Activated CD4-positive, alpha-beta T cell treated with anti-CD3 and anti-CD28 coated beads, Interleukin-2, amount 10 ng/mL, durations not matched to agents 24 days and 14 days (primary cell): ENCODE measurements at regions of chr1 and their contacts with region 1.

Region 1: DNA sequence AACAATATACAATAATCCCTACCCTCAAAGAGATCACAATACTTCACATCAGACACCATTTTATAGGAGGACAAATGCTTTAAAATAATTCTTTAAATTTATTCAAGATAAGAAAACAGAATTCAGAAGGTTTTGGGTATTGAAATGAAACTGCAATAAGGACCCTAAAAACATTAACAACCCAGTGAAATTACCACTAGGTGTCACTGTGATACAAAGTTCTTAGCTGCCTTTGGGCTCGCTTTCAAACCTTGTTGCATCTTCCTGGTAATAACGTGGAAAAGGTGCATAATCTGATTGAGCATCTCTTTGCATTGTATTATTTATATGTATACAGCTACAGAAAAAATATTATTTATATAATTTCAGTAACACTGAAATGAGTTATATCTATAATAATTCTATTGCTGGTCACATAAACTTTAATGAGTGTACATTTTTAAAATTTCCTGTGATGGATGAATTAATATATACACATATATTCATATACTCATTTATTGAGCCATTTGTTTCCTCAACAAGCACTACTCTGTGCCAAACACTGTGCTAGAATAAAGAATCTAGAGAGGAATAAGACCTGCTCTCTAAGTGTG is 185.2 kb downstream of the FAF1 start:
- DNase-seq: peak; percentile 65
- H3K4me3 Mint-ChIP-seq: no peak overlapping the region
- H3K27ac Mint-ChIP-seq: no peak overlapping the region
- H3K4me1 Mint-ChIP-seq: peaks cover 2% of the 10 kb centered on the region
- H3K27me3 Mint-ChIP-seq: no peaks in the 10 kb centered on the region

Region 2: DNA sequence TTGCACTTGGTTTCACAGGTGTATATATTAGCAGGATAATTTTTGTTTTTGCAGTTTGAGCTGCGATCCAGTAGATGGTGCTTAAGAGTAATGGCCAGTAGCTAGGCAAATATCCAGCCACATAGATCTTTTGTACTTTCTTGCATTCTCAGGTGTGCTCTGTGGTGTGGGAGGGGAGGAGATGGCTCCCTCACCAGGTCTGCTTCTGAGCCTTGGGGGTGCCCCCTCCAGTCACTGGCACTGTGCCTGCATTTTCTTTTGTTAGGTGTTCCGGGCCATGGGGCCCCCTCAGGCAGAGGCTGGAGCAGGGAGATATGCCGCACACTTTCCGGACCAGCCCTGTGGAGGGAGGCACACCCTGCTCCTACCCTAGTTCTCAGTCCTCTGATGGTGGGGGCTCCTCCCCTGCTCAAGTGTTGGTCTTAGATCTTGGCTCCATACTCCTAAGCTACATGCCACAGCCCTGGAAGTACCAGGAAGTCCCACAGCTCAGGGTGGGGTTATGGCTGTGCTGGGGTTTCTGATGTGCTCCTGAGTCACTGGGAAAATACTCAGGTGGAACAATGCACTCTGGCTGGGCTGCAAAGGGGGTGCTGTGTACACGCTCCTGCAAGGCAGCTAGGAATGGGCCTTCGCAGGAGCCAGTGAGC is 154.1 kb before region 1 on chr1:
- intact Hi-C with region 1: no loop called
- DNase-seq: no peak
- H3K4me3 Mint-ChIP-seq: no peak overlapping the region
- H3K27ac Mint-ChIP-seq: no peak overlapping the region
- H3K4me1 Mint-ChIP-seq: no peaks in the 10 kb centered on the region
- H3K27me3 Mint-ChIP-seq: no peaks in the 10 kb centered on the region

Region 3: GRCh38 chr1:51044834-51045233 is 270.0 kb after region 1 on chr1:
- intact Hi-C with region 1: loop called (anchors 10 kb)
- DNase-seq: no peak
- H3K4me3 Mint-ChIP-seq: no peak overlapping the region
- H3K27ac Mint-ChIP-seq: no peak overlapping the region
- H3K4me1 Mint-ChIP-seq: no peaks in the 10 kb centered on the region
- H3K27me3 Mint-ChIP-seq: peaks cover 7% of the 10 kb centered on the region